B cell (primary cell): ENCODE measurements at regions of chr16 and their contacts with region 1.

Region 1: DNA sequence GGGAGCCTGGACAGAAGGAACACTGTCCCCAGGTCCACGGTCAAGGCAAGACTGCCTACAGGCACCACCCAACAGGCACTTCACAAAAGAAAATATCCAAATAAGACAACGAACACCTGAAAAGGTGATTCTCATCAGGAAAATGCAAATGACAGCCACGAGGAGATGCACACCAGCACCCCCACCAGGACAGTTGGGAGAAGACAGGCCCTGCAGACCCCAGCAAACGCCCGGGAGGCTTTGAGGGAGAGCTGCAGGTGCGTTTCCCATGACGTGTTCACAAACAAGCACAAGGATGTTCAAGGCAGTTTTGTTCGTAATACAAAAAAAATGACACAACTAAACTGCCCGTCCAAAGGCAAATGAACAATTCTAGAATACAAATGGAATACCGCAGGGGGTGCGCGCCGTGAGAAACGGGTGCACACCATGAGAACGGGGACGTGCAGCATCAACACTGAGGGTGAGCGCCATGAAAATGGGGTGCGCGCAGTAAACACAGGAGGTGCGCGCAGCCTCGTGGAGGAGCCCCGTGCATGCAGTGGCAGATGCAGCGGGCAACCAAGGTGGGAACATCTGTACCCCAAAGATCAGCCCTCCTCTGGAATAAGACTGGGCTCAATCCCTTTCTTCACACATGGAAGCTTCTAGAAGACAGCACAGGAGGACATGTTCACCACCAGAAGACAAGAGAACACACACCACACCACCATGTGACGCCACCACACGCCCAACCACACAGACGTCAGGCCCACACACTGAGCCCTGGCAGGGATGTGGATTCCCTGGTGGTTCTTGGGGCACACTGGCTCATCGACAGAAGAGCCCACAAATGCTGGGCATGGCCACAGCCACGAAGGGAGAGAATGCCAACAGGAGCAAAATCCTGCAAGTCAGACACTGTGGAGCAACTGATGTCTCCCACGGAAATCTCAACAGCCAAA is 91.2 kb downstream of the ZNF778 start:
- DNase-seq: peak; percentile 41
- ATAC-seq: peak; percentile 62
- H3K4me3 ChIP-seq: no peak overlapping the region
- H3K4me3 Mint-ChIP-seq: no peak overlapping the region
- H3K27ac ChIP-seq: no peak overlapping the region
- H3K27ac Mint-ChIP-seq: no peak overlapping the region
- H3K4me1 ChIP-seq: peaks cover 17 to 21% of the 10 kb centered on the region in 2 donors
- H3K4me1 Mint-ChIP-seq: peaks cover 50% of the 10 kb centered on the region
- H3K27me3 ChIP-seq: no peaks in the 10 kb centered on the region
- H3K27me3 Mint-ChIP-seq: no peaks in the 10 kb centered on the region
- CTCF ChIP-seq: peak; percentile 66

Region 2: GRCh38 chr16:89201439-89202377 is 107.0 kb before region 1 on chr16:
- CTCF ChIA-PET with region 1: no interaction called
- POLR2A ChIA-PET with region 1: no interaction called
- intact Hi-C with region 1: no loop called
- DNase-seq: peak; percentile 75
- ATAC-seq: peak; percentile 93
- H3K4me3 ChIP-seq: peak overlapping the region in 2 of 5 experiments; percentile 6 to 36
- H3K4me3 Mint-ChIP-seq: peak overlapping the region; percentile 76
- H3K27ac ChIP-seq: no peak overlapping the region
- H3K27ac Mint-ChIP-seq: no peak overlapping the region
- H3K4me1 ChIP-seq: peaks cover 15% of the 10 kb centered on the region in 2 donors
- H3K4me1 Mint-ChIP-seq: peaks cover 13% of the 10 kb centered on the region
- H3K27me3 ChIP-seq: peaks cover 0 to 54% (median 25%) of the 10 kb centered on the region in 4 experiments
- H3K27me3 Mint-ChIP-seq: peaks cover 32% of the 10 kb centered on the region
- CTCF ChIP-seq: no peak

Region 3: DNA sequence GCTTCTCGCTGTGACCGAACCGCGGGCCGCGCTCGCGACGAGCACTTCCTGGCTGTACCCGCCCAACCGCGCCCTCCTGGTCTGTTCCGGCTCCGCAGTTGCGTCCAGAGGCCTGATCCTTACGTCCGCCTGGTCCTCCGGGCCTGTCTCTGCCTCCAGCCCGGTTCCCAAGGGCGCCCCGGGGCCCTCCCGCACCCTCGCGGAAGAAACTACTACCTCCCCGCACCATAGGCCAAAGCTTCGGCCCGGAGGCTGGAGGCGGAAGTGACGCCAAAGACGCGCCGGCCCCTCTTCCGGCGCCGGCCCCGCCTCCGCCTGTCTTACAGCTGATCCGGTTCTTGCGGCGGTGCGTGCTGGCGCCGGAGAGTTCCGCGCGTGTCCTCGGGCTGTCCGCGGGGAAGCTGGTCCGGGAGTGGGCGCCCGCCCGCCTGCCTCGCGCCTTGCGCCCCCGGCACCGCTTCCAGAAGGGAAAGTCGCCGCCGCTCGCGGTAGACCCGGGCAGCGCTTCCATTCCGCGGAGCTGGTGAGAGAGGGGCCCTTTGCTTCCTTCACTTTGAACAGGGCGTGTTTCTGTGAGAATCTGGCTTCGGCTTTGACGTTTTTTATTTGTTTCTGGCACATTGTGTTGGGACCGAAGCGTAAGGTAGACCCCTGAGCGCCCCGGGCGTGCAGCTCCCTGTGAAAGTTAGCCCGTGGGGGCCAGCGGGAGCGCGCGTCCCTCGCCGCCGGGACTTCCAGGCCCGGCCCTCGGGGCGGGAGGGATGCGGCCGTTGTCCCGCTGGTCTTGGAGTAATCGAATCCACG is 91.1 kb before region 1 on chr16 and contains the start of gene ZNF778:
- CTCF ChIA-PET with region 1: no interaction called
- POLR2A ChIA-PET with region 1: no interaction called
- intact Hi-C with region 1: no loop called
- DNase-seq: peak; percentile 92
- ATAC-seq: peak; percentile 85
- H3K4me3 ChIP-seq: peak within 1 kb of the TSS; percentile 80 to 92 (median 86)
- H3K4me3 Mint-ChIP-seq: peak within 1 kb of the TSS; percentile 80
- H3K27ac ChIP-seq: peak within 1 kb of the TSS; percentile 81 to 92
- H3K27ac Mint-ChIP-seq: peak within 1 kb of the TSS; percentile 80
- H3K4me1 ChIP-seq: peaks cover 12 to 17% of the 10 kb centered on the region in 2 donors
- H3K4me1 Mint-ChIP-seq: peaks cover 19% of the 10 kb centered on the region
- H3K27me3 ChIP-seq: no peaks in the 10 kb centered on the region
- H3K27me3 Mint-ChIP-seq: no peaks in the 10 kb centered on the region
- CTCF ChIP-seq: no peak
- total RNA-seq, gene ZNF778: 8.9 and 13.4 TPM in 2 replicates

Region 4: DNA sequence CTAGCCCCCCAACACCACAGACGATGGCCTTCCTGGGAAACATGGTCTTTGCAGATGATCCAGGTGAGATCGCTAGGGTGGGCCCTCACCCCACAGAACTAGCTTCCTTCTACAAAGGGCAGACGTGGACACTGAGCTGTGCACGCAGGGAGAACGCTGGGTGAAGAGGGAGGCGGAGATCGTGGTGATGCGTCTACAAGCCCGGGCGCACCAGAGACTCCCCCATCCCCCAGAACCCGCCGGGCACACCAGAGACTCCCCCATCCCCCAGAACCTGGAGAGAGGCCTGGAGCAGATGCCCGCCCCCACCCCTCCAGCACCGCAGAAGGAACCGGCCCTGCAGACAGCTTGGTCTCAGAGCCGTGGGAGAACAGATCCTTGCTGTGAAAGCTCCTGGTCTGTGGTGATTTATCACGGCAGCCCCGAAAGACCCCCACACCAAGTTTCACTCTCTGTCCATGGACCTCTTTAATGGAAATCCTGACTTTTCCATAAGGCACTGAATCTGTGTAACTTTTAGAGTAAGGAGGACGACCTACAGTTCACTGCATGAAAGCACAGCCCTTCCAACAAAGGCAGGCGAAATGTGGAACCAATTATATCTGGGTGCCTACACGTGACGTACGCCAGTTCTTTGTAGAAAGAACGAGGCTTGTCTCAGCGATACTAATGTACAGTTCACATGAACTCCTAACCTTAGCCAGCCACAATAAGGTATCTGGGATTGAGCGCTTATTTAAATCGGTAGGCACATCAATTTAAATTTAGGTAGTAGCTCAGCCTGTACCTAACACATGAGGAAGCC is 93.2 kb after region 1 on chr16:
- CTCF ChIA-PET with region 1: no interaction called
- POLR2A ChIA-PET with region 1: interaction called, 12 read pairs
- intact Hi-C with region 1: no loop called
- DNase-seq: no peak
- ATAC-seq: no peak
- H3K4me3 ChIP-seq: no peak overlapping the region
- H3K4me3 Mint-ChIP-seq: peak overlapping the region; percentile 29
- H3K27ac ChIP-seq: no peak overlapping the region
- H3K27ac Mint-ChIP-seq: peak overlapping the region; percentile 20
- H3K4me1 ChIP-seq: peaks cover 25 to 34% of the 10 kb centered on the region in 2 donors
- H3K4me1 Mint-ChIP-seq: peaks cover 63% of the 10 kb centered on the region
- H3K27me3 ChIP-seq: no peaks in the 10 kb centered on the region
- H3K27me3 Mint-ChIP-seq: no peaks in the 10 kb centered on the region
- CTCF ChIP-seq: no peak